GM18951 (cell line): ENCODE measurements at regions of chr1 and their contacts with region 1.

Region 1: DNA sequence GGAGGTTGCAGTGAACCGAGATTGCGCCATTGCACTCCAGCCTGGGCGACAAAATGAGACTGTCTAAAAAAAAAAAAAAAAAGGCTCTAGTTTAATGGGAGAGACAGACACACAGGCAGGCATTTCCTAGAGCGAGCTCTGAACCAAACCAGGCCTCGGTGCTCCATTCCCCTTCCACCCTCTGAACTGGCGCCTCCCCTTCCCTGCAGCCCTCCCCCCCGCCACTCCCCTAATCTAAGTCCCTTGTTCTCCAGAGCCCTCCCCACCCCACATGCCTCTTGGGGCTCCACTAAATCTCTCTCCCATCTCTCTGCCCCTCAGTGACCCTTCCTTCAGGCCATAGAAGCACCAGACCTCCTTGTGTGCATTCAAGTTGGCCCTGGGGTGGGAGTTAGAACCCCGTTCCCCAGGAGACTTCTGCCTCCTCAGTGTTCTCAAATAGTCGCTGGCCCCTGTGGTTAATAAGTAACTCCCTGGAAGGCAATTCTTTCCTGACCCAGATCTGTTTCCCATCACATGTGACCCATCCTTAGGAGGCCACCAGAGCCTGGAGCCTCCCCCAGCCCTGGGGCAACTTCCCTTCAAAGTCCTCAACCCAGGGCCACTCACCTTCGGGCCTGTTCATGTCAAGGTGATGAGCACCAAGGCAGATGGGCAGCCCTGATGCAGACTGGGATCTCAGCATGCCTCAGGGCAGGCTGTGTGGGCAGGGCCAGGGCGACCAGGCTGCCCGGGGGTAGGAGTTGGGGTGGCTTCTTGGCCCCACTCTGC is 42.6 kb upstream of the EPB41 start:
- POLR2A ChIP-seq: no peak

Region 2: GRCh38 chr1:28144203-28145135 is 727.3 kb before region 1 on chr1:
- in situ Hi-C with region 1: no loop called
- POLR2A ChIP-seq: no peak

Region 3: DNA sequence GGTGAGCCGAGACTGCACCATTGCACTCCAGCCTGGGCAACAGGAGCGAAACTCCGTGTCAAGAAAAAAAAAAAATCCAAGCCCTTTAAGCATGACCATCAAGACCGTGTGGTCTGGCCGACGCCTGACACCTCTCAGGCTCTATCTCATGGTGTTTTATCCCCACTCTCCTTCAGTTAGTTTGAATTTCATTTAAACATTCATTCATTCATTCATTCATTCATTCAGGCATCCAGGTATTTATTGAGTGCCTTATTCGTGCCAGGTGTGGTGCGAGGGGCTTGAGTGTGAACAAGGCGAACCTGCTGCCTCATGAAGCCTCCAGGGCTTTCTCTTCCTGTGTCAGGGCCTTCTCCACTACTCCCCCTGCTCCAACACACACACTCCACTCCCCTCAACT is 82.4 kb before region 1 on chr1:
- in situ Hi-C with region 1: loop called (anchors 5 kb)
- POLR2A ChIP-seq: no peak